ENCODE measurements at regions of chr5 and their contacts with region 1.

Region 1: DNA sequence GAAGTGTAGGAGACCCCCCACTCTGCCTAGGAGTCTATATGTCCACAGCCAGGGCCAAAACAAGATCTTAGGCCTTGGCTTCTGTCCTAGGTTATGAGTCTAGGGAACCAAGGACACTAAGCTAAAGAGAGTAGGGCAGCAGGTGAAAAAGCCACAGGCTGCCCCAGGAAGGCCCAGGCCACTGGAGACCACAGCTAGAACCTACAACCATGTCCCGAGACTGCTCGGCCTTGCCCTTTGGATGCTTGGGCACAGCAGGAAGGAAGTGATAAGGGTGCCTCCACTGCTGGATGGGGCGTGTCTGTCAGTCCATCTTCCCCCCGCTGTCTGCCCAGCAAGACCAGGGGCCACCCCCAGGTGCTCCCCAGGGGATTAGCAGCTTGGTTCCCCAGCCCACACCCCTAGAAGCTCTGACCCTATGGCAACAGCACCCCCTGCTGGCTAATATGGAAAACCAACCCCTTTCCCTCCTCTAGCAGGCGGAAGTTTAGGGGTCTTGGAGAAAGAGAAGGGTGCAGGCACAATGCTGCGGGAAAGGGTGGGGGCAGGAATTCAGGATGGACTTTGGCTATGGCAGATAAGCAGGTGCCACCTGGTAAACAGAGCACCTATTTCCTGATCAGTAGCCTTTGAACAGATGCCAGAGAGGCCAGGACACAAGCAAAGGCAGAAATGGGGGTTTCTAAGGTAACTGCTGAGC is 10.5 kb upstream of the IRF1 start:
- DNase-seq: peak; percentile 75 to 80 (median 76)
- H3K4me3 ChIP-seq: no peak overlapping the region
- H3K4me3 Mint-ChIP-seq: peak overlapping the region in 1 of 8 donors; percentile 0
- H3K27ac ChIP-seq: peak overlapping the region; percentile 18
- H3K27ac Mint-ChIP-seq: peak overlapping the region in 6 of 7 donors; percentile 13 to 97 (median 58)
- H3K4me1 ChIP-seq: peaks cover 44% of the 10 kb centered on the region
- H3K4me1 Mint-ChIP-seq: peaks cover 19 to 50% (median 36%) of the 10 kb centered on the region in 4 donors
- H3K27me3 ChIP-seq: no peaks in the 10 kb centered on the region
- H3K27me3 Mint-ChIP-seq: peaks cover 1 to 2% of the 10 kb centered on the region in 2 donors

Region 2: DNA sequence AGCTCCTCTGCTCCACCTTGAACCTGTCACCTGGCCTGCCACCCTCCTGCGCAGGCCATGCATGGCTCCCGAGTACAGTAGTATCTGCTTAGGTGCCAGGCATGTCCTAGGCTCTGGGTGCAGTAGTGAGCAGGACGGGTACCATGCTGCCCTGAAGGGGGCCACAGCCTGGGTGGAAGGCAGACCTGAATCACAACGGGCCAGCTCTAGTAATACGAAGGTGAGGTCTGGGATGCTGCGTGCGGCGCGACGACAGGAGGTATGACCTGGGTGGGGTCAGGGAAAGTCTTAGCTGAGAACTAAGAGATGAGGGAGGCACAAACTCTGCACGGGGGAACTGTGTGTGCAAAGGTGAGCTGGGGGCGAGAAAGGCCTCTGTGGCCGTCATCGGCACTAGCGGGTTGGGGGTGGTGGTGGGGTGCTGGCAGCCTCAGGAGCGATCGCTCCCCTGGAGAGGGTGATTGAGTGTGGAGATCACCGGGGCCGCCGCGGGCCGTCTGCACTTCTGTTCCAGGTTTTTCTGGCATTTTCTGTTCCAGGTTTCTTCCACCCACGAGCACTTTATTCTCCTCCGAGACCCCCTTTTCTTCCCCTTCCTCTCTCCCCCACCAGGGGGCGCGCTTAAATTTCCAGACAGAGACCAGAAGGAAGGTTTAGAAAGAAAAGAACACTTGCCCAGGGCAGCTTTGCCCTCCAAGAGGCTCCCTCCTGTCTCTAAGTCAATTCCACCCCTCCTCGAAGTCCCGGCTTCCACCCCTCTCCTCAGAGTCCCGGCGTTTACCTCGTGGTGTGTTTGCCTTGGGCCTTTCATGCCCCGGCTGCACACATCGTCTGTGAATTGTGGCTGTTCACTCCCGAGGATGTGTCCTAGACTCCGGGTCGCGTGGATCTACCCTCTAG is 228.5 kb before region 1 on chr5:
- CTCF ChIA-PET with region 1: interaction called, 19 read pairs
- POLR2A ChIA-PET with region 1: no interaction called
- intact Hi-C with region 1: no loop called
- DNase-seq: peak; percentile 32 to 54 (median 47)
- H3K4me3 ChIP-seq: no peak overlapping the region
- H3K4me3 Mint-ChIP-seq: peak overlapping the region in 4 of 8 donors; percentile 6 to 61 (median 41)
- H3K27ac ChIP-seq: no peak overlapping the region
- H3K27ac Mint-ChIP-seq: peak overlapping the region in 1 of 7 donors; percentile 12
- H3K4me1 ChIP-seq: no peaks in the 10 kb centered on the region
- H3K4me1 Mint-ChIP-seq: peaks cover 0 to 22% (median 12%) of the 10 kb centered on the region in 4 donors
- H3K27me3 ChIP-seq: no peaks in the 10 kb centered on the region
- H3K27me3 Mint-ChIP-seq: peaks cover 6 to 16% of the 10 kb centered on the region in 2 donors

Region 3: GRCh38 chr5:132394667-132395259 is 106.3 kb before region 1 on chr5:
- CTCF ChIA-PET with region 1: interaction called, 543 read pairs
- POLR2A ChIA-PET with region 1: interaction called, 151 read pairs
- intact Hi-C with region 1: no loop called
- DNase-seq: no peak
- H3K4me3 ChIP-seq: no peak overlapping the region
- H3K4me3 Mint-ChIP-seq: peak overlapping the region in 4 of 8 donors; percentile 2 to 65 (median 59)
- H3K27ac ChIP-seq: no peak overlapping the region
- H3K27ac Mint-ChIP-seq: peak overlapping the region; percentile 50 to 92 (median 77)
- H3K4me1 ChIP-seq: peaks cover 70% of the 10 kb centered on the region
- H3K4me1 Mint-ChIP-seq: peaks cover 53 to 97% (median 72%) of the 10 kb centered on the region in 4 donors
- H3K27me3 ChIP-seq: no peaks in the 10 kb centered on the region
- H3K27me3 Mint-ChIP-seq: no peaks in the 10 kb centered on the region

Region 4: DNA sequence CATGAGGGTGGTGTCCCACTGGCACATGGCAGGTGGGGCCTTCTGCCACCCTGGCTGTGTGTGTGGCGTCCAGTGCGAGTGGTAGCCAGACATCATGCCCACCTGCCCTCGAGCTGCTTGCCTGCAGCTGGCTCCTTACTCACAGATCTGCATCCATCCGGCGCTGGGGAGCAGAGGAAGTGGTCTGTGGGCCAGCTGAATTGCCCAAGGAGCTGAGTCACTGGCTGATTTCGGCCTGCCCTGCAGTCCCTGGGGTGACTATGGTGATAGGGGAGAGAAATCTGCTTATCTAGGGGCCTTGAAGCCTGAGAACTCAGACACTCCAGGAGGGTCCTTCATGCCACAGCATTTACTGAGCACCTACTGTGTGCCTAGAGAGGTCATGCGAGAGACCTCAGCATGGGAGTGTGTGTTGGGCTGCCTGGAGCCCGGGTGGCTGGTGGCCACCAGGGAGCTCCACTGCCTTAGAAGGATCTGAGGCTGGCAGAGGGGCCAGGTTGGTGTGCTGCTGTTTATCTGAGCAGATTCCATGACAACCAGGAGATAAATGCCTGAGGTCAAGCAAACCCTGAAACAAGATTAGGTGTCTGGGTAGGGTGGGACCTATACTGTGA is 74.4 kb before region 1 on chr5:
- CTCF ChIA-PET with region 1: interaction called, 80 read pairs
- POLR2A ChIA-PET with region 1: interaction called, 565 read pairs
- intact Hi-C with region 1: no loop called
- DNase-seq: peak; percentile 37 to 83 (median 44)
- H3K4me3 ChIP-seq: peak overlapping the region; percentile 10 to 28
- H3K4me3 Mint-ChIP-seq: peak overlapping the region; percentile 67 to 83 (median 76)
- H3K27ac ChIP-seq: peak overlapping the region; percentile 77
- H3K27ac Mint-ChIP-seq: peak overlapping the region; percentile 96 to 99 (median 98)
- H3K4me1 ChIP-seq: peaks cover 100% of the 10 kb centered on the region
- H3K4me1 Mint-ChIP-seq: peaks cover 80 to 98% (median 94%) of the 10 kb centered on the region in 4 donors
- H3K27me3 ChIP-seq: no peaks in the 10 kb centered on the region
- H3K27me3 Mint-ChIP-seq: no peaks in the 10 kb centered on the region

Region 5: DNA sequence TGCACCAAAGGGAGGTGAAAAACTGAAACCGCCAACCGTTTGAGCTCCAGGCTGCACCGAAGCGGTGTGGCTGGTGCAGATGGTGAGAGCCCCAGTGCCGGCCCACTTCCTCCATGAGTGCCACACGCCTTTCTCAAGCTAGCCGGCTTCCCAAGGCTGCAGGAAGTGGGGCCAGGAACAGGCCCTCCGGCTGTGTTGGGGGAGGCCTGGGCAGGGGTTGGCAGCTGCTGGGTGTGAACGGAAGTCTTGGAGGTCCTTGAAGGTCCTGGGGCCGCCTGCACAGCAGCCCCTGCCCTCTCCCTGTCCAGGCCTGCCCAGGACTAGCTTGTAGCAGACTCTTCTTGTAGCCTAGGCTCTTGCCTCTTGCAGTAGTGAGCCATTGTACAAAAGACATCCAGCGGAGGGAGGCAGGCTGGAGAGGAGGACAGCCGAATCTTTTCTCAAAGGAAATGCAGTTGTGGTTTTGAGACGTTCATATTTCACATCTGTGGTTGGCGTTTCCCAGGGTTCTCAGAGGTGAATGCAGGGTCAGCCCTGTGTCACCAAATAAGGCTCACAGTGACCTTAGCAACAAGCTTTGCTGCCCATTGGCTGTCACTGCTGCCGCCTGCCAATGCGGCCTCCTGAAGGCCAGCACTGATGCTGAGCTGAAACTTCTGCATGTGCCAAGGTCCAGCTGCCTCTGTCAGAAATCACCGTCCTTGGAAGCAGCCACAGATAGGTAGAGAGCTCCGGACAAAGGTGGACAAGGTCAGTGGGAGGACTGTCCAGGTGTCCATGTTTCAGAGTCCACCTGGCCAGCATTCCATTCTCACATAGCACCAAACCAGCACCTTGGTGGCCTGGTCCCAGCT is 34.4 kb before region 1 on chr5:
- CTCF ChIA-PET with region 1: interaction called, 18 read pairs
- POLR2A ChIA-PET with region 1: interaction called, 1,580 read pairs
- intact Hi-C with region 1: no loop called
- DNase-seq: peak; percentile 84 to 91 (median 85)
- H3K4me3 ChIP-seq: peak overlapping the region; percentile 2 to 50
- H3K4me3 Mint-ChIP-seq: peak overlapping the region; percentile 66 to 87 (median 83)
- H3K27ac ChIP-seq: peak overlapping the region; percentile 63
- H3K27ac Mint-ChIP-seq: peak overlapping the region; percentile 94 to 98 (median 96)
- H3K4me1 ChIP-seq: peaks cover 99% of the 10 kb centered on the region
- H3K4me1 Mint-ChIP-seq: peaks cover 76 to 100% (median 90%) of the 10 kb centered on the region in 4 donors
- H3K27me3 ChIP-seq: no peaks in the 10 kb centered on the region
- H3K27me3 Mint-ChIP-seq: no peaks in the 10 kb centered on the region

Region 6: GRCh38 chr5:132490486-132491367 is 10.4 kb before region 1 on chr5 and contains the start of gene IRF1:
- CTCF ChIA-PET with region 1: interaction called, 73 read pairs
- POLR2A ChIA-PET with region 1: interaction called, 1,580 read pairs
- intact Hi-C with region 1: no loop called
- DNase-seq: peak; percentile 97 to 99 (median 99)
- H3K4me3 ChIP-seq: peak within 1 kb of the TSS; percentile 94 to 96
- H3K4me3 Mint-ChIP-seq: peak within 1 kb of the TSS; percentile 94 to 97 (median 96)
- H3K27ac ChIP-seq: peak within 1 kb of the TSS; percentile 99
- H3K27ac Mint-ChIP-seq: peak within 1 kb of the TSS; percentile 93 to 99 (median 99)
- H3K4me1 ChIP-seq: peaks cover 79% of the 10 kb centered on the region
- H3K4me1 Mint-ChIP-seq: peaks cover 46 to 83% (median 61%) of the 10 kb centered on the region in 4 donors
- H3K27me3 ChIP-seq: no peaks in the 10 kb centered on the region
- H3K27me3 Mint-ChIP-seq: no peaks in the 10 kb centered on the region
- total RNA-seq, gene IRF1: 192 to 202 TPM

Region 7: DNA sequence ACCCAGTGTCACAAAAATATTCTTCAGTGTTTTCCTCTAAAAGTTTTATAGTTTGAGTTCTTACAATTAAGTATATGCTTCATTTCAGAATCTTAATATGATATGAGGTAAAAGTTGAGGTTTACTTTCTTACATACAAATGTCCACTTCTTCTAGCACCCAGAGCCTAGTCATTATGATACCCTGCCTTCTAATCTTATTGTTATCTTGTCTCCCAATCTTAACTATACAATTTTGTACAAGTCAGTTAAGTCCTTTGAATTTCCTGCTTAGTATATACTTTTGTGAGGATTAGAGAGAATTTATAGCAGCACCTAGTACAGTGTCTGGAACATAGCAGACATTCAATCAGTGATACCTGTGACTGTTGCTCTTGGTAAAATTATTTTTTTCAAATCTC is 85.0 kb after region 1 on chr5:
- CTCF ChIA-PET with region 1: no interaction called
- POLR2A ChIA-PET with region 1: no interaction called
- intact Hi-C with region 1: no loop called
- DNase-seq: no peak
- H3K4me3 ChIP-seq: no peak overlapping the region
- H3K4me3 Mint-ChIP-seq: no peak overlapping the region
- H3K27ac ChIP-seq: no peak overlapping the region
- H3K27ac Mint-ChIP-seq: peak overlapping the region in 1 of 7 donors; percentile 17
- H3K4me1 ChIP-seq: no peaks in the 10 kb centered on the region
- H3K4me1 Mint-ChIP-seq: peaks cover 0 to 5% (median 2%) of the 10 kb centered on the region in 4 donors
- H3K27me3 ChIP-seq: no peaks in the 10 kb centered on the region
- H3K27me3 Mint-ChIP-seq: no peaks in the 10 kb centered on the region

Measured in CD4-positive, alpha-beta memory T cell (primary cell).